ENCODE measurements at regions of chr2 and their contacts with region 1.

Region 1: DNA sequence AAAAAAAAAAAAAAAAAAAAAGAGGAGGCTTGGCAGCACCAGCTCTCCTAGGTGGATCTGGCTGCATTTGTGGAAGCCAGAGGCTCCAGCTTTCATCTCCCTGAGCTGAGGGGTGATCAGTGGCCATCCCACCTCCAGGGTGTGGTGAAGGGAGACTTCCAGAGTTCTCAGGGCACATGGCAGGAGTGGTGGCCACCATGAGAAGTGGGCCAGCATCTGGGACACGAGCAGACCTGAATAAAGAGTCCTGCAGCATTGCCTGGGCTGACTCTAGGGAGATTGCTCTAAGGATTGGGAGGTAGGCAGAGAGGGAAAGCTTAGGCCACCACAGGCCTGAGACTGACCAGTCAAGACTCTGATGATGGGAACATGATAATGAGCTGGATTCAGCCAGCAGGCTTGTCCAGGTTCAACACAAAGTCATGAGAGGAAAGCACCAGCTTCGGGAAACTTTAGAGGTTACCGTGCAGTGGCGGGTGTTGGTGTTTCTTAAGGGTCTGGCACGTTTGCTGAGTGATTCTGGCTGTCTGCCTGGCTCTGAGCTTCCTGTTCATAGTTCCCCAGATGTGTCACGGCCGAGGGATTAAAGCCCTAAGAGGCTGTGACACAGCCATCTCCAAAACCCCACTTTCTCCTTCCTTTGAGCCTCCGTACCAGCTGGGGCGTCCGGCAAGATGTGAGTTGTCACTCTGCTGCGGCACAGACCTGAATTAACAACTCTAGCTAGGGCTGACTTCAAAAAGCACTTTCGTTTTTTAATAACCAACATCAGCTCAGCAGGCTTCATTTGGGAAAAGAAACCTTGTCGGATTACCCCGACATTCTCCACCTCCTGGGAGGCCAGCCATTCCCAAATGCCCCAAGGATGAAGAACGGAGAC is 38.3 kb upstream of the IL1R1 start:
- DNase-seq: peak; percentile 66 to 92
- H3K4me3 ChIP-seq: peak overlapping the region; percentile 48 to 60
- H3K27ac ChIP-seq: peak overlapping the region; percentile 80 to 81
- H3K4me1 ChIP-seq: peaks cover 0 to 5% of the 10 kb centered on the region in 2 donors
- H3K27me3 ChIP-seq: no peaks in the 10 kb centered on the region
- CTCF ChIP-seq: no peak

Region 2: GRCh38 chr2:102020596-102021181 is 83.5 kb before region 1 on chr2:
- intact Hi-C with region 1: no loop called
- DNase-seq: peak; percentile 69 to 94
- H3K4me3 ChIP-seq: no peak overlapping the region
- H3K27ac ChIP-seq: no peak overlapping the region
- H3K4me1 ChIP-seq: peaks cover 0 to 3% of the 10 kb centered on the region in 2 donors
- H3K27me3 ChIP-seq: no peaks in the 10 kb centered on the region
- CTCF ChIP-seq: peak; percentile 97 to 99 (median 99)

Region 3: DNA sequence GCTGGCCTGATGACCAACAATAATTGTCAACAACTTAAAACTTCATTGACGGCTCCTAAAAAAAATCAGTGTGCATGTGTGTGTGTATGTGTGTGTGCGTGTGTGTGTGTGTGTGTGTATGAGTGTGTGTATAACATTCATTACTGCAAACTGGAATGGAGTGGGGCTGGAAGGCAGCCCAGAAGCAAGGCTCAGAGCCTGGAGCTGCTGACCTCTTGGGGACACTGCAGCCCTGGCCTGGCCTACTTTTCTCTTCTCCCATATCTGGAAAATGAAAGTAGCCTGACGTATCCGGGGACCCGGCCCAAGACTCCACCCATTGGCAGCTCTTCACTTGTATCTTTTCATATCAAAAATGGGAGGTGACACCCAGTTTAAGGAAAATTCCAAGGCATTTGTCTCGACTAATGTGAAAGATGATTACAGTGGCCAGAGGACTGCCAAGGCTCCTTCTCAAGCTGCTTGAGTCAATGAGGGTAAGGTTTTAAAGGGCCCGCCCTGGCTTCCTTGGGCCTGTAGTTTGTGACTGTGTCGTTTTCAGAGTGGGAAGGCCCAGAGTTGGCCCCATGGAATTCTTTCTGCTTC is 34.1 kb before region 1 on chr2:
- intact Hi-C with region 1: loop called (anchors 2 kb)
- DNase-seq: peak in 1 of 2 donors; percentile 94
- H3K4me3 ChIP-seq: no peak overlapping the region
- H3K27ac ChIP-seq: peak overlapping the region; percentile 73 to 79
- H3K4me1 ChIP-seq: peaks cover 17 to 37% of the 10 kb centered on the region in 2 donors
- H3K27me3 ChIP-seq: no peaks in the 10 kb centered on the region
- CTCF ChIP-seq: peak in 1 of 3 experiments; percentile 32

Region 4: GRCh38 chr2:102141970-102142828 is 38.0 kb after region 1 on chr2 and contains the start of gene IL1R1:
- intact Hi-C with region 1: loop called (anchors 5 kb)
- DNase-seq: peak in 1 of 2 donors; percentile 88
- H3K4me3 ChIP-seq: peak within 1 kb of the TSS; percentile 64 to 77
- H3K27ac ChIP-seq: peak within 1 kb of the TSS; percentile 93 to 96
- H3K4me1 ChIP-seq: peaks cover 0 to 5% of the 10 kb centered on the region in 2 donors
- H3K27me3 ChIP-seq: no peaks in the 10 kb centered on the region
- CTCF ChIP-seq: no peak
- total RNA-seq, gene IL1R1: 132 TPM

Region 5: DNA sequence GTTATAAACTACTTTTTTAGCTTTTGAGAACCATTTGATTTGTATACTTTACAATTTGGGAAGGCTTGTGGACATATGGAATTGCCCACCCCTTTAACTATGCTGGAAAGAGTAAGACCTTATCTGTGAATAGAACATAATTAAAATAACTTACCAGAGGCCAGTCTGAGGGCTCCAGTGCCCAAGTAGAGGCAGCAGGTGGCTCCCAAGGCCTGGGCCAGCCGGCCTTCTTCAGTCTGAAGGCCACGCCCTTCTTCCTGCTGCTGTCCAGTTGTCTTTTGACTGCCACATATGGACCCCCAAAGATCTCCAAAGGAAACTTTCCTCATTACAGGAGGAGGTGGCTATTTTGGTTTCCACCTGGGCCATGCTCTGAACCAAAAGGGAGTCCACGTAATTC is 306.7 kb after region 1 on chr2:
- intact Hi-C with region 1: no loop called
- DNase-seq: no peak
- H3K4me3 ChIP-seq: no peak overlapping the region
- H3K27ac ChIP-seq: no peak overlapping the region
- H3K4me1 ChIP-seq: no peaks in the 10 kb centered on the region
- H3K27me3 ChIP-seq: no peaks in the 10 kb centered on the region
- CTCF ChIP-seq: no peak

Measured in ascending aorta (tissue), 2 donors.